OCI-LY7 (cell line): ENCODE measurements at regions of chr1 and their contacts with region 1.

Region 1: DNA sequence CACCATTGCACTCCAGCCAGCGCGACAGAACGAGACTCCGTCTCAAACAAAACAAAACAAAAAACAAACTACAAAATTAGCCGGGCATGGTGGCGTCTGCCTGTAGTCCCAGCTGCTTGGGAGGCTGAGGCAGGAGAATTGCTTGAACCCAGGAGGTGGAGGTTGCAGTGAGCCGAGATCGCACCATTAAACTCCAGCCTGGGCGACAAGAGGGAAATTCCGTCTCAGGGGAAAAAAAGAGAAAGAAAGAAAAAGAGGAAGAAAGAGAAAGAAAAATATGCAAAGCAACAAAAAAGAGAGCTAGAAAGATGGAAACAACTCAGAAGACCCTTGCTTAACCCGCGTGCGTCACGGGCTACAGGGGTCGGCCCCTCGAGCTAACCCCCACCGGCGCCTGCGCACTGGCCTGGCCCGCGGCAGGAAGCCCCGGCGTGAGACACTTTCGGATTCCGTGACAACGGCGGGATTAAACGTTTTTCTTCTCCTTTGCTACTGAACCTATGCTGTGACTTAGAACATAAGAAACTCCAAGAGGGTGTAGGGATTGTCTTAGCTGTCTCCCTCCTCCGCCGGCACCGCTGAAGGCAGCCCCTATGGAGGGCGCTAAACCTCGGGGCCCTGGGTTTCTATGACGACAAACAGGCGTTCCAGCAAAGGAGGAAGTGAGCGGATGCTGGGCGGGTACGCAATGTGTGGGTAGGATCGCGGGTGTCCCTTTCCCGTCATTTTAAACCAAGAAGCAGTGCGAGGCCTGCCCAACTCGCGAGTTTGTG is at the start of gene AXDND1:
- DNase-seq: peak; percentile 91
- H3K4me3 ChIP-seq: peak within 1 kb of the TSS; percentile 92
- H3K27ac ChIP-seq: peak within 1 kb of the TSS; percentile 91
- H3K4me1 ChIP-seq: peaks cover 11% of the 10 kb centered on the region
- CTCF ChIP-seq: peak; percentile 25; the same call in 1 of the 2 replicates
- total RNA-seq, gene AXDND1: 0.16 and 0.23 TPM in 2 replicates

Region 2: DNA sequence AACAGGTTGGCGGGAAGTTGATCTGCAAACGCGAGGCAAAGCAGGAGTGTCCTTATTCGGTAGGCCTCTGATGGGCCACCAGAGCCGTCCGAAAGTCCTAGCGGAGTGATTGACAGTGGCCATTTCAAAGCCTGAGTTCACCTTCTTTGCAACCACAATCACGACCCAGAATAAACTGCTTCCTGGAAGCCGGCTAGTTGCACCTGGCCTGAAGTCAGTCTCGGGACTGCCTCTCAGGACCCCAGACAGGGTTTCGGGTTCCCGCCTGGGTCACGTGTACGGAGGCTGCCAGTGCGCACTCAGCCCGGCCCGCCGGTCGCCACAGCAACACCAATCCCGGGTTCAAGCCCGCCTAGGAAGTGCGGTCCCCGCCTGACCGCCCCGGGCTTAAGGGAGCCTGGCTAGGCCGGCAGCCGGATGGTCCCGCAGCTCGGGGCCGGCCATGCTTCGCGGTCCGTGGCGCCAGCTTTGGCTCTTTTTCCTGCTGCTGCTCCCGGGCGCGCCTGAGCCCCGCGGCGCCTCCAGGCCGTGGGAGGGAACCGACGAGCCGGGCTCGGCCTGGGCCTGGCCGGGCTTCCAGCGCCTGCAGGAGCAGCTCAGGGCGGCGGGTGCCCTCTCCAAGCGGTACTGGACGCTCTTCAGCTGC is 283.7 kb before region 1 on chr1 and contains the start of gene TOR3A:
- CTCF ChIA-PET with region 1: interaction called, 3 read pairs
- POLR2A ChIA-PET with region 1: interaction called, 5 read pairs
- intact Hi-C with region 1: loop called (anchors 1 kb)
- DNase-seq: peak; percentile 96
- H3K4me3 ChIP-seq: peak within 1 kb of the TSS; percentile 90
- H3K27ac ChIP-seq: peak within 1 kb of the TSS; percentile 91
- H3K4me1 ChIP-seq: peaks cover 37% of the 10 kb centered on the region
- CTCF ChIP-seq: no peak
- total RNA-seq, gene TOR3A: 32.9 and 49.0 TPM in 2 replicates

Region 3: DNA sequence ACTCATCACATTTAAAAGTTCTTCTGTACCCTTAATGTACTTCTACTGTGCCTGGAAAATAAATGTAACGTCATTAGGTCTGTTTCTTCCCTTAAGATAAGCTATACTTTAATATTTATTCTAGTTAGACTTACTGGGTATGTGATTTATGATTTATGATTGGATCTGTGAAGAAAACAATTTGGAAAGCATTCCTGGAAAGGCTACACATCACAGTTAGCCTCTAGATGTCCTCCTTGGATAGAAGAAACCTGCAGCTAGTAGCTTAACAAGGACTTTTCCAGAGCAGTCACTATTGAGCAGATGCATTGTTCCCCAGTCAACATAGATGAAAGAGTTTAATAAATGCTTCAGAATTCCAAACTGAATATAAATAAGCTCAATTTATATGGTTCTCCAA is 113.8 kb before region 1 on chr1:
- CTCF ChIA-PET with region 1: no interaction called
- POLR2A ChIA-PET with region 1: no interaction called
- intact Hi-C with region 1: loop called (anchors 10 kb)
- DNase-seq: peak; percentile 25
- H3K4me3 ChIP-seq: no peak overlapping the region
- H3K27ac ChIP-seq: no peak overlapping the region
- H3K4me1 ChIP-seq: no peaks in the 10 kb centered on the region
- CTCF ChIP-seq: peak; percentile 63

Region 4: DNA sequence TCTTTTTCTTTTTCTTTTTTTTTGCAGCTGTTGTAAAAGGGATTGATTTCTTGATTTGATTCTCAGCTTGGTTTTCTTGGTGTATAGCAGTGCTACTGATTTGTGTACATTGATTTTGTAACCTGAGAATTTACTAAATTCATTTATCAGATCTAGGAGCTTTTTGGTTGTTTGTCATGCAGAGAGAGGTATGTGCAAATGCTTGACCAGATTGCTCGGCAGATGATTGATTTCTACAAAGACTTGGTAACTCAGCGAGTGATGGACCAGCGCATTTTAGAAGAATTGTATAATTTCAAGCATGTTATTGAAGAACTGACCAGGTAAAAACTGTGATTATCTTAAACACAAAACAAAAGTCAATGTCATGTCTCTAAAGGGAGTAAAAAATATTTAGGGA is 28.2 kb after region 1 on chr1:
- CTCF ChIA-PET with region 1: no interaction called
- POLR2A ChIA-PET with region 1: no interaction called
- intact Hi-C with region 1: no loop called
- DNase-seq: no peak
- H3K4me3 ChIP-seq: no peak overlapping the region
- H3K27ac ChIP-seq: no peak overlapping the region
- H3K4me1 ChIP-seq: no peaks in the 10 kb centered on the region
- CTCF ChIP-seq: no peak

Region 5: DNA sequence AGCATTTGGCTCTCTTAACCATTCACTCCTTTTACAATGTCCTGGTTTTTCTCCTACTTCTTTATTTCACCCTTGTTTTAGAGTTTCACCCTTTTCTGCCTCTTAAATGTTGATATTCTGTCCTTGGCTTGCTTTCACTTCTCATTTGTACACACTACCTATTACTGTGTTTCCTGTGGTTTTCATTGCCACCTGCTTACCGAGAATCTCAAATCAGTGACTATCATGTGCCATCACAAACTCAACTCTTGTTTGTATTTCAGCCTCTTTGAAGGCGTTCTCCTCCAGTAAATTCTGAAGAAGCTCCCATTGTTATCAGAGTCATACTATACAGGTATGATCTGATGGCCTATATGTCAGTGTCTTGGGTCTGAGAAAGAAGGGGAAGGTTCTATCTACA is 144.5 kb after region 1 on chr1:
- CTCF ChIA-PET with region 1: no interaction called
- POLR2A ChIA-PET with region 1: no interaction called
- intact Hi-C with region 1: loop called (anchors 5 kb)
- DNase-seq: peak; percentile 92
- H3K4me3 ChIP-seq: peak overlapping the region; percentile 35
- H3K27ac ChIP-seq: peak overlapping the region; percentile 86
- H3K4me1 ChIP-seq: peaks cover 37% of the 10 kb centered on the region
- CTCF ChIP-seq: no peak